ENCODE measurements at regions of chr1 and their contacts with region 1.

Region 1: GRCh38 chr1:8873506-8874229 is 4.8 kb downstream of the ENO1 start:
- DNase-seq: peak; percentile 77
- ATAC-seq: peak; percentile 18
- H3K4me3 Mint-ChIP-seq: peak overlapping the region; percentile 97
- H3K27ac Mint-ChIP-seq: peak overlapping the region; percentile 71
- H3K4me1 Mint-ChIP-seq: peaks cover 65% of the 10 kb centered on the region
- H3K27me3 Mint-ChIP-seq: no peaks in the 10 kb centered on the region

Region 2: DNA sequence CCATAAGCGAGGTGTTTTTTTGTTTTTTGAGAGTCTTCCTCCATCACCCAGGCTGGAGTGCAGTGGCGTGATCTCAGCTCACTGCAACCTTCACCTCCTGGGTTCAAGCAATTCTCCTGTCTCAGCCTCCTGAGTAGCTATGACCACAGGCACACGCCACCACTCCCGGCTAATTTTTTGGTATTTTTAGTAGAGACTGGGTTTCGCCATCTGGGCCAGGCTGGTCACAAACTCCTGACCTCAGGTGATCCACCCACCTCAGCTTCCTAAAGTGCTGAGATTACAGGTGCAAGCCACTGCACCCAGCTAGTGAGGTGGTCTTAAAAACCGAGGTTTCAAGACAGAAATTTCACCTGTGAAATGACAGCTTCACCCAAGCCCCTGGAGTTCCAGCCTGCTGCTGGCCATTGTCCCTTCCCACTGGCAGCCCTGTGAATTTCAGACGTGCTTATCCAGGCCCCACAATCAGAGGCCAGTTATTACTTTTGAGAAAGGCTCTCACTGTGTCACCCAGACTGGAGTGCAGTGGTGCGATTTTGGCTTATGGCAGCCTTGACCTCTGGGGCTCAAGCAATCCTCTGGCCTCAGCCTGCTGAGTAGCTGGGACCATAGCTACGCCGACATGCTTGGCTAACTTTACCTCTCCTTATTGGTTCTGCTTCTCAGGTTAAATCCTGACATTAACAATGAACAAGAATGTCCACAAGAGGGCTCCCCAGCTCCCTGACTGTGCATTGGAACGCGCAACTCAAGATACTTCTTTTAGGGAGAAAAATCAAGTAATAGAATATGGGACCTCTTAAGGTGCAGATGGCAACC is 14.6 kb before region 1 on chr1:
- CTCF ChIA-PET with region 1: interaction called, 17 read pairs
- POLR2A ChIA-PET with region 1: interaction called, 30 read pairs
- DNase-seq: peak; percentile 74
- ATAC-seq: peak; percentile 52
- H3K4me3 Mint-ChIP-seq: peak overlapping the region; percentile 42
- H3K27ac Mint-ChIP-seq: peak overlapping the region; percentile 77
- H3K4me1 Mint-ChIP-seq: peaks cover 64% of the 10 kb centered on the region
- H3K27me3 Mint-ChIP-seq: no peaks in the 10 kb centered on the region